Vagina (tissue), 2 donors: ENCODE measurements at regions of chr14 and their contacts with region 1.

Region 1: DNA sequence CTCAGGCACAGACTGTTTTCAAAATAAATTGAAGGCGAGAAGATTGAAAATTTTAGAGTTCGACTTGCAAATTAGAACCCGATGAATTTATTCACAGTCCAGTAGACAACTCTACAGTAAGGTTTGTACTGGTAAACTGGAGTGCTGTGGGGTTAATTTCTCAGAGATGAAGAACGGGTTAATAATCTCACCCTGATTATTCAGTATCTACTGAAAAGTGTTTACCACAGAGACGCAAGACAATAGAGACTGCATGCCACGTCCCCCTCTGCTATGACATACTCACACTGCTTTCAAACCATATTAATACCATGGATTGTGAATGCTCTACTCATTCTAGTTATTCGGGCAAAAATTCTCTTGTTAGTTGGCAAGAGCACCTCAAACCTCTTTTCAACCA is 36.1 kb downstream of the CFL2 start:
- DNase-seq: no peak
- H3K4me3 ChIP-seq: no peak overlapping the region
- H3K27ac ChIP-seq: no peak overlapping the region
- H3K4me1 ChIP-seq: no peaks in the 10 kb centered on the region
- H3K27me3 ChIP-seq: no peaks in the 10 kb centered on the region
- CTCF ChIP-seq: no peak
- POLR2A ChIP-seq: no peak

Region 2: DNA sequence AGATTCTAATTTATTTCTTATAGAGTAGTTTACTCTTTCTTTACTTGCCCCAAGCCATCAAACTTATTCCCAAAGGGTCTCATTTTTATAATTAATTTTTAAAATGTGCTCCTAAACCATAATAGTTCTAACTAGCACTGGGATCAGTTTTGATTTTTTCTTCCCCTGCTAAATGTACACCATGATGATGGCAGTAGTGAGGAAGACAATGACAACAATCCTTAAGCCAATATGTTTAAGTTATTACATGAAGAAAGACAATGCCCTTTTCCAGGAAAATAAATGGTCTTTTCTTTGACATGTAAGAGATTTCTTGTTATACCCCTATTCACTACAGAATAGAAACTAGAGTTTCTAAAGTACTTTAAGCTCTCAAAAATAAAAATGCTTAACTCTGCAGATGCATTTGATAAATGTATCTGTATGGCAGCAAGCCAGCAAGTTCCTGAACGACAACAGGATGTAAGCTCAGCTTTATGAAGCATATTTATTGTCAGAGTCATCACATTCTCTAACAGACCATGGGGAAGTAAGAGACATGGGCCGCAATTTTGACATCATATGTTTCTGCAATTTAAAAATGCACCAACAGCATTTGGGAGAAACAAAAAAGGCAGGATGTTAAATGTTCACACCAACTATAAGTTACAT is 12.4 kb before region 1 on chr14:
- intact Hi-C with region 1: no loop called
- DNase-seq: no peak
- H3K4me3 ChIP-seq: no peak overlapping the region
- H3K27ac ChIP-seq: no peak overlapping the region
- H3K4me1 ChIP-seq: no peaks in the 10 kb centered on the region
- H3K27me3 ChIP-seq: no peaks in the 10 kb centered on the region
- CTCF ChIP-seq: no peak
- POLR2A ChIP-seq: no peak

Region 3: DNA sequence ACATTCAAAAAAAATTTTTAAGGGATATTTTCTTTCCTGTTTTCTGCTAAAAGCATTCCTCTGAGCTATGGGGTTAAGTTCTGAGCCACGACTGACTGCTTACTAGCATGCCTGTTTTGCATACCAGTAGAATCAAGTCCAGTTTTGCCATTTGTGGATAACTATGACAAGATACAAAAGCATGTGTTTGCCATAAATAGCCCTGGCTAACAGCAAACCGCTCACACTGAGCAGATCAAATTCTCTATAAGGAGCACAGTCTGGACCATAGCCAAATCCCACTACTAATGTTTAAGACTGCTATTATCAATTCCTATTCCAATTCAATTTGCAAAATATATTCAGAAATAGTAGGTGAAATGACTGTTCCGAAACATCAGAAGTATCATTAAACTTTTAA is 32.9 kb after region 1 on chr14:
- intact Hi-C with region 1: no loop called
- DNase-seq: no peak
- H3K4me3 ChIP-seq: no peak overlapping the region
- H3K27ac ChIP-seq: peak overlapping the region; percentile 63
- H3K4me1 ChIP-seq: peaks cover 25% of the 10 kb centered on the region
- H3K27me3 ChIP-seq: no peaks in the 10 kb centered on the region
- CTCF ChIP-seq: no peak
- POLR2A ChIP-seq: no peak

Region 4: GRCh38 chr14:34722717-34723545 is 44.6 kb after region 1 on chr14:
- intact Hi-C with region 1: loop called (anchors 5 kb)
- DNase-seq: no peak
- H3K4me3 ChIP-seq: no peak overlapping the region
- H3K27ac ChIP-seq: no peak overlapping the region
- H3K4me1 ChIP-seq: peaks cover 7% of the 10 kb centered on the region
- H3K27me3 ChIP-seq: no peaks in the 10 kb centered on the region
- CTCF ChIP-seq: peak; percentile 66 to 87 (median 82)
- POLR2A ChIP-seq: no peak

Region 5: DNA sequence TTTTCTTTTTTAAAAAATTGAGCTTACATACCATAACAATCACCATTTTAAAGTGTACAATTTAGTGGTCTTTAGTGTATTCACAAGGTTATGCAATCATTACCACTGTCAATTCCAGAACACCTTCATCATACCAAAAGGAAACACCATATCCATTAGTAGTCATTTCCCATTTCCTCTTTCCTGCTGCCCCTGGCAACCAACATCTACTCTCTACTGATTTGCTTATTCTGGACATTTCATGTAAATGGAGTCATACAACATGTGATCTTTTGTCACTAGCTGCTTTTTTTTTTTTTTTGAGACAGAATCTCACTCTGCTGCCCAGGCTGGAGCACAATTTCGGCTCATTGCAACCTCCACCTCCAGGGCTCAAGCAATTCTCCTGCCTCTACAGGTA is 102.9 kb after region 1 on chr14:
- intact Hi-C with region 1: no loop called
- DNase-seq: no peak
- H3K4me3 ChIP-seq: no peak overlapping the region
- H3K27ac ChIP-seq: no peak overlapping the region
- H3K4me1 ChIP-seq: no peaks in the 10 kb centered on the region
- H3K27me3 ChIP-seq: no peaks in the 10 kb centered on the region
- CTCF ChIP-seq: no peak
- POLR2A ChIP-seq: no peak